ENCODE measurements at regions of chr1 and their contacts with region 1.

Region 1: GRCh38 chr1:190303501-190303900 is 174.2 kb downstream of the BRINP3 start:
- DNase-seq: no peak

Region 2: DNA sequence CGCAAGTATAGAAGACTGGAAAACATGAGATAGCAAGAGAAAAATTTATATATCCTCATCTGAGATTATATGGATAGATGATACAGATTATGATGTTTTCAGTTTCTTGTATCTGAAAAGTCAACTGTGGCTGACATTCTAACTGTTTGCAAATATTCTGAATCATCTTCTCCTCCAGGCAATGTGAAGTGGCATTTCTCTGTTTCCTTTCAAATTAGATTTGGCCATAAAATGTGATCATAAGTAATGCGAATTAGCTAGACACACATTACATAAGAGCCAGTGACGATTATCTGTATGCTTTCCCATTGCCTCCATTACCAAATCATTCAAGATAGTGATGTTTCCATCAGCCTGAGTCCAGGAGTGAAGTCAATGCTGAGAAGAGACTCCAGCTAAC is 91.1 kb before region 1 on chr1:
- intact Hi-C with region 1: no loop called
- DNase-seq: no peak

Region 3: DNA sequence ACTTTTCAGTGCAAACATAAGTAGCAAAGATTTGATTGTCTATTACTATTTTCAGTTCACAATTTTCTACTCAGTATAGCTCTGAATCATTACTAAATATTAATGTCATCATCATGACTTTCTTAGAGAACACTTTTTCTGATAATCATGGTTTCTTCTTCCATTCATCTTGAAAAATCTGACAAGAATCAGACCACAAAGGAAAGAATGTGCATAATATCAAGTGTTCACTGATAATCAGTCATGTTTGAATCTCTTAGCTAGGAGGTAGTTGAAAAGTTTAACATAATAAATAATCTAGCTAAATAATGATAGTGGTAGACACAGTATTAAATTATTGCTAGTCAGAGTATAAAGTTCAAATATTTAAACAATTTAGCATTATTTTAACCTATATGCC is 41.0 kb after region 1 on chr1:
- intact Hi-C with region 1: loop called in 1 of 2 experiments (anchors 2 kb)
- DNase-seq: no peak